ENCODE measurements at regions of chr13 and their contacts with region 1.

Region 1: GRCh38 chr13:20945952-20946383 is 43.4 kb upstream of the XPO4 start:
- DNase-seq: no peak
- H3K4me3 ChIP-seq: peak overlapping the region; percentile 35
- CTCF ChIP-seq: no peak

Region 2: DNA sequence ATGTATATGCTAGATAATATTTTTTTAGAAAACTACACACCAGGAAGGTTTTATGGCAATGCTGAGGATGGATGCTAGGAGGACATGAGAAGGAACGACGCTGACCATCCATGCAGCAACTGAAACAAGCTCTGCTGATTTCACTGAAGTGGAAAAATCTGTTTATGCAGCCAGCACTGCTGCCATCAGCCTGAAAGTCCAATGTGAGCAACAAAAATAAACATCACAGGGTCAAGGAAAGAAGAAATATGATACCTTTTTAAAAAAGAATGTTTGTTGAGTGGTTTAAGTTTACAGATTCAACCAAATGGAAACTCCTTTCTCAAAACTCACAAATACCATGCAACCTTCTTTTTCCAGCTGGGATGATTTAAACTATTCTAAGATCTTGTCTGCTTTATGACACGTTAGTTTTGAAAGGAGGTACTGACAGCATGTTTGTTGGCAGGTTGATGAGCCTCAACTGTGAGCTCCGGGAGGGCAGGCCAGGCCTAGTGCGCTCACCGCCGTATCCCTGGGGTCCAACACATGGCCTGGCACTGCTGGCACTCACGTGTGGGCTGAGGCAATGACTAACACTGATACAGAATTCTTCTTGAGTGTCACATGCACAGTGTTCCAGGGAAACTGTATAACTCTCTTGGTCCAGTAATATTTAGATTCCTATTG is 68.7 kb after region 1 on chr13:
- CTCF ChIA-PET with region 1: no interaction called
- POLR2A ChIA-PET with region 1: no interaction called
- DNase-seq: peak; percentile 21
- H3K4me3 ChIP-seq: no peak overlapping the region
- CTCF ChIP-seq: no peak

Region 3: GRCh38 chr13:21124852-21125251 is 178.9 kb after region 1 on chr13:
- CTCF ChIA-PET with region 1: interaction called, 29 read pairs
- POLR2A ChIA-PET with region 1: no interaction called
- DNase-seq: no peak
- H3K4me3 ChIP-seq: no peak overlapping the region
- CTCF ChIP-seq: no peak

Region 4: GRCh38 chr13:21130116-21130515 is 184.1 kb after region 1 on chr13:
- CTCF ChIA-PET with region 1: interaction called, 59 read pairs
- POLR2A ChIA-PET with region 1: no interaction called
- DNase-seq: no peak
- H3K4me3 ChIP-seq: no peak overlapping the region
- CTCF ChIP-seq: no peak

Region 5: GRCh38 chr13:21176220-21176982 is 230.4 kb after region 1 on chr13 and contains the starts of genes MRPL57 and SKA3:
- CTCF ChIA-PET with region 1: interaction called, 66 read pairs
- POLR2A ChIA-PET with region 1: no interaction called
- DNase-seq: peak; percentile 49
- H3K4me3 ChIP-seq: peak within 1 kb of the TSS; percentile 88
- CTCF ChIP-seq: peak; percentile 5

Region 6: DNA sequence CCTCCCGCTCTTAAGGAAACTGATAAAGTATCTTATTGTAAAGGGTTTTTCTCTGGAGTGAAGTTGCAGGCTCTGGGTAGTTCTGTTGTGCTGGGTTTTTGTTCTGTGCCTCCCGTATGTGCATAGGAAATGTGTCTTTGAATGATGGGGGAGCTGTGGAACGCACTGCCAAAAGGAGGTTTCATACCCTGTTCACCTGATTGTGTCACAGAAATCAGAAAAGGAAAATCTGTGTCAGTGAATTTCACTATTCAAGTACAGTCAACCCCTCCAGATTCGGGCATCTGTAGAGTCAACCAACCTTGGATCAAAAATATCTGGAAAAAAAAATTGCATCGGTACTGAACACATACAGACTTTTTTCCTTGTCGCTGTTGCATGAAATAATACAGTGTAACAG is 358.3 kb after region 1 on chr13:
- CTCF ChIA-PET with region 1: no interaction called
- POLR2A ChIA-PET with region 1: no interaction called
- DNase-seq: no peak
- H3K4me3 ChIP-seq: no peak overlapping the region
- CTCF ChIP-seq: no peak

Measured in AG04449 (cell line).